WTC11 (cell line): ENCODE measurements at regions of chr10 and their contacts with region 1.

Region 1: DNA sequence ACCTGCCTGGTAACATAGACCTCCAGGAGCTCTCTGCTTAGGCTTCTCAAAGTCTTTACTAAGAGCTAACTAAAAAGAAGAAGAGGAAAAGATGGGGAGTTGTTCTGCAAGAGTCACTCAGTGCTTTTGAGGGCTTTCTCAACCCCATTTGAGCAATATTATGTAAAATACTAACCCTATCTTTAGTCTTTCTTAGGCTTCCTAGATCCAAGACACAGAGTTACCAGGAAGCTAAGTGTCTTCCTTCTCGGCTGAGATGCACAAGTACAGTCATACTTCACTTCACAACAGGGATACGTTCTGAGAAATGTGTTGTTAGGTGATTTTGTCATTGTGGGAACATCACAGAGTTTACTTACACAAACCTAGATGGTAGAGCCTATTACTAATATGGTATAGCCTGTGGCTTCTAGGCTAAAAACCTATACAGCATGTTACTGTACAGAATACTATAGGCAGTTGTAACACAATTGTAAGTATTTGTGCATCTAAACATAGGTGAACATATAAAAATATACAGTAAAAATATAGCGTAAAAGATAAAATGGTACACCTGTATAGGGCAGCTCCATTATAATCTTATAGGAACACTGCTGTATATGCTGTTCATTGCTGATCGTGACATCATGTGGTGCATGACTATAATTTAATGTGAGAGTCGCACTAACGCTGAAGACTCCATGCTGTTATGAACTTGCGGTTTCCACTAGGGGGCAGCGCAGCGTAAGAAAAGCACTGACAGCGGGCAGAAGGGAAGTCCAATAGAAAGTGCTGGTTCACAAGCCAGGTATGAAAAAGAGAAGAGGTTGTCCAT is 16.3 kb downstream of the ANKRD22 start:
- DNase-seq: peak; percentile 81
- ATAC-seq: peak; percentile 93
- H3K4me3 Mint-ChIP-seq: no peak overlapping the region
- H3K27ac Mint-ChIP-seq: no peak overlapping the region
- H3K4me1 Mint-ChIP-seq: no peaks in the 10 kb centered on the region
- H3K27me3 Mint-ChIP-seq: no peaks in the 10 kb centered on the region; the same call in 1 of the 2 replicates
- CTCF ChIP-seq: peak; percentile 70

Region 2: DNA sequence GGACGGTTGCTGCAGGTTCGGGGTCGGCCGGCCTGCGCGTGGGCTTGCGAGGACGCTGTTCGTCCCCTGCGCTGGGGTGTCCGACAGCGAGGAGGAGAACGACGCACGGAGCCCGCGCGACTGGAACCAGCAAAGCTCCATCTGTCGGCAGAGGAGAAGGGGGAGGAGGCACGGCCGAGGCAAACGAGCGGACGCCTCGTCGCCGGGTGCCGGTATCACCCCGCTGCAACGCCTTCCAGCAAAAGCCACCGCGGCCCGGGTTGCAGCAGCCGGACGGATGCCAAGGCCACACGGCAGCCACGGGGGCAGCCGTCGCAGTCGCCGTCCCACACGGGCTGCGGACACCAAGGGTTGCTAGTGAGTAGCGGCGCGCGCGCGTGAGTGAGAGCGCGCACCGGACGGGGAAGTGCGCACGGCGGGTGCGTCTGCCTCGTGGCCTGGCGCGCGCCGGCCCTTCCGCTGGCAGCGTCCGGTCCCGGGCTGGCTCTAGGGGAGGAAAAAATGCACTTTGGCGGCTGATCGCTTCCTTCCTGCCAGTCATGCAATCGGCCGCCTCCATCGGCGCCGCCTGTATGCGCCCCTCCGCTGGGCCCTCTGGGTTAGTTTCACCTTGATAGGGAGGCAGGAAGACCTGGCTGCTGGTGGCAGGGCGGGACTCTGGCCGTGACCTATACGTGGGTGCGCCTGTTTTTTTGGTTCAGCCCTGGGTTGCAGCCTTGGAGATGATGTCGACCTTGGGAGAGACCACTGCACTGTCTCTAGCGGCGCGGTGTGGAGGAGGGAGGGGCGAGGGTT is 45.2 kb after region 1 on chr10:
- CTCF ChIA-PET with region 1: interaction called, 11 read pairs
- POLR2A ChIA-PET with region 1: no interaction called
- DNase-seq: peak; percentile 74
- ATAC-seq: peak; percentile 82
- H3K4me3 Mint-ChIP-seq: peak overlapping the region; percentile 88
- H3K27ac Mint-ChIP-seq: peak overlapping the region; percentile 89
- H3K4me1 Mint-ChIP-seq: peaks cover 50% of the 10 kb centered on the region
- H3K27me3 Mint-ChIP-seq: peaks cover 15% of the 10 kb centered on the region
- CTCF ChIP-seq: no peak